ENCODE measurements at regions of chr11 and their contacts with region 1.

Region 1: GRCh38 chr11:72752088-72752914 is at the start of gene ARAP1:
- DNase-seq: peak; percentile 68 to 90
- ATAC-seq: peak; percentile 85 to 95 (median 88)
- H3K4me3 ChIP-seq: peak within 1 kb of the TSS; percentile 90
- H3K4me3 Mint-ChIP-seq: peak within 1 kb of the TSS; percentile 93
- H3K27ac ChIP-seq: peak within 1 kb of the TSS; percentile 73
- H3K27ac Mint-ChIP-seq: peak within 1 kb of the TSS; percentile 91 to 93
- H3K4me1 ChIP-seq: peaks cover 53% of the 10 kb centered on the region
- H3K4me1 Mint-ChIP-seq: peaks cover 42 to 65% of the 10 kb centered on the region in 2 donors
- H3K27me3 ChIP-seq: no peaks in the 10 kb centered on the region
- H3K27me3 Mint-ChIP-seq: no peaks in the 10 kb centered on the region
- CTCF ChIP-seq: no peak
- total RNA-seq, gene ARAP1: 293 to 327 (median 296) TPM

Region 2: DNA sequence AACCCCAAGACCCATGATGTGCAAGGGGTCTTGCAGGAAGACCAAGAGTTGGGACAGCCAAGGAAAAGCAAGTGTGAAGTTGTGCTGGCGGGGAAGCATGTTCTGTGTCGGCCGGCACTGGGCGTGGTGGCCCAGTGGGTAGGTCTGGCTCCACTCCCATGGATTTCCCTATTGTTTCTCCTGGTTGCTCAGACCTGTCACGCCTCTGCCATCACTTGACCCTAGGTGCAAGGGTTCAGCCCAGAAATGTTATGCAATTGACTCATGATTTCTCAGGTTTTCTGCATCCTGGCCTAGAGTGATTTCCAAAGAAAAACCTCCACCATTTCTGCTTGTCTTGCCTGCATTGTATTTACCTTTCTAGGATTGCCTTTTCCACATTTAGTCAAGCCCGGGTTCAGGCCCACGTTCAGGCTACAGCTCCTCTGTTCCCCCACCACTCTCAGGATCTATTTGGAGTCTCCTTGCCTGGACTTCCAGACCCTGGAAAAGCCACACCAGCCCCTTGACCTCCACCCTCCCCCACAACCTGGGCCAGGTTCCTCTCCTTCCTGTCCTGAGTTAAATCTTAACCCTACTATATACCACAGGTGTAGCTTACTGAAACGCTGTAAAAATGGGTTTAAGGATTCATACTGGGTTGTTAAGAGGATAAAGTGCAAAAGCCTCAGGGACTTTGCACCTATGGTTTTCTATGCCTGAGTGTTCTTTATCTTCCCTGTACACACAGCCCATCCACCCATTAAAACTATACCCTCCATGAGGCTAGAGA is 577.8 kb before region 1 on chr11:
- intact Hi-C with region 1: no loop called
- DNase-seq: no peak
- ATAC-seq: no peak
- H3K4me3 ChIP-seq: no peak overlapping the region
- H3K4me3 Mint-ChIP-seq: no peak overlapping the region
- H3K27ac ChIP-seq: no peak overlapping the region
- H3K27ac Mint-ChIP-seq: no peak overlapping the region
- H3K4me1 ChIP-seq: peaks cover 3% of the 10 kb centered on the region
- H3K4me1 Mint-ChIP-seq: peaks cover 12 to 13% of the 10 kb centered on the region in 2 donors
- H3K27me3 ChIP-seq: no peaks in the 10 kb centered on the region
- H3K27me3 Mint-ChIP-seq: no peaks in the 10 kb centered on the region
- CTCF ChIP-seq: no peak

Region 3: GRCh38 chr11:72736452-72737069 is 15.7 kb before region 1 on chr11:
- intact Hi-C with region 1: loop called (anchors 2 kb)
- DNase-seq: peak; percentile 78 to 88
- ATAC-seq: peak; percentile 66 to 91 (median 82)
- H3K4me3 ChIP-seq: no peak overlapping the region
- H3K4me3 Mint-ChIP-seq: peak overlapping the region; percentile 87
- H3K27ac ChIP-seq: peak overlapping the region; percentile 97
- H3K27ac Mint-ChIP-seq: peak overlapping the region; percentile 97 to 100
- H3K4me1 ChIP-seq: peaks cover 91% of the 10 kb centered on the region
- H3K4me1 Mint-ChIP-seq: peaks cover 75 to 80% of the 10 kb centered on the region in 2 donors
- H3K27me3 ChIP-seq: no peaks in the 10 kb centered on the region
- H3K27me3 Mint-ChIP-seq: no peaks in the 10 kb centered on the region
- CTCF ChIP-seq: no peak

Region 4: GRCh38 chr11:72793425-72794367 is 41.4 kb after region 1 on chr11 and contains the start of gene STARD10:
- intact Hi-C with region 1: loop called (anchors 5 kb)
- DNase-seq: peak; percentile 97 to 98
- ATAC-seq: peak; percentile 93 to 99 (median 94)
- H3K4me3 ChIP-seq: peak within 1 kb of the TSS; percentile 80
- H3K4me3 Mint-ChIP-seq: peak within 1 kb of the TSS; percentile 96
- H3K27ac ChIP-seq: peak within 1 kb of the TSS; percentile 97
- H3K27ac Mint-ChIP-seq: peak within 1 kb of the TSS; percentile 99
- H3K4me1 ChIP-seq: peaks cover 22% of the 10 kb centered on the region
- H3K4me1 Mint-ChIP-seq: peaks cover 23 to 24% of the 10 kb centered on the region in 2 donors
- H3K27me3 ChIP-seq: no peaks in the 10 kb centered on the region
- H3K27me3 Mint-ChIP-seq: no peaks in the 10 kb centered on the region
- CTCF ChIP-seq: peak; percentile 94
- total RNA-seq, gene STARD10: 10.9 to 17.3 (median 11.7) TPM

Region 5: GRCh38 chr11:73830261-73830660 is 1078.0 kb after region 1 on chr11:
- intact Hi-C with region 1: no loop called
- DNase-seq: no peak
- ATAC-seq: no peak
- H3K4me3 ChIP-seq: no peak overlapping the region
- H3K4me3 Mint-ChIP-seq: no peak overlapping the region
- H3K27ac ChIP-seq: no peak overlapping the region
- H3K27ac Mint-ChIP-seq: no peak overlapping the region
- H3K4me1 ChIP-seq: no peaks in the 10 kb centered on the region
- H3K4me1 Mint-ChIP-seq: peaks cover 0 to 4% of the 10 kb centered on the region in 2 donors
- H3K27me3 ChIP-seq: no peaks in the 10 kb centered on the region
- H3K27me3 Mint-ChIP-seq: no peaks in the 10 kb centered on the region
- CTCF ChIP-seq: no peak